CD8-positive, alpha-beta T cell (primary cell): ENCODE measurements at regions of chr9 and their contacts with region 1.

Region 1: DNA sequence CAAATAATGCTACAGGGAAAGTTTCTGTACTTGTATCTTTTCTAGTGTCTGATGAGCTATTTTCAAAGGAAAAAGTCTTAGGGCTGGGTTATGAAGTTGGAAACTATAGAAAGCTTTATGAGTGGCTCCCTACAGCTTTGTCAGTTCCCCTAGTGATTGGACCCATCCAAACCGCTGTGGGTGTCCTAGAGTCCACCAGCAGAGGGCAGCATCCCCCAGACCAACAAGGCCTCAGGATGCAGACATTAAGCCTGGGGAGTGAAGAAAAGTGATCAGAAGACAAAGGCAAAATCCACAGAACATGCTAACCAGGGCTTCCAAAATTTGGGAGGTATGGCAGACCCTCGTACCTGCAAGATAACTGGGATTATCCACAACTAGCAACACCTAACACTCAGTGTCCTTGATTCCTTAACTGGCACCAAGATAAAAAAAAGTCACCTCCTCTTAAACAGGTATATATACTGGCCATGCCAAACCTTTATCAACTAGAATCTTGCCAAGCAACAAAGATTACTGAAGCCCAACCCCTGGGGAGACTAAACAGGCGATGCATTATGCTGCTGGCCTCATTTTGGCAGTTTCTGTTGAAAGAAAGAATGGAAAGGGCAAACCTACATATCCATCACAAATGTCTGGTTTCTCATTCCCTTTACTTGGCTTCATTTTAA is 110.4 kb upstream of the NR5A1 start:
- DNase-seq: peak; percentile 41 to 82 (median 74)
- ATAC-seq: peak; percentile 73
- H3K4me3 ChIP-seq: no peak overlapping the region
- H3K4me3 Mint-ChIP-seq: no peak overlapping the region
- H3K27ac ChIP-seq: no peak overlapping the region
- H3K27ac Mint-ChIP-seq: no peak overlapping the region
- H3K4me1 ChIP-seq: no peaks in the 10 kb centered on the region
- H3K4me1 Mint-ChIP-seq: no peaks in the 10 kb centered on the region
- H3K27me3 ChIP-seq: peaks cover 0 to 4% of the 10 kb centered on the region in 2 experiments
- H3K27me3 Mint-ChIP-seq: peaks cover 9% of the 10 kb centered on the region
- CTCF ChIP-seq: peak; percentile 80

Region 2: GRCh38 chr9:124511426-124511840 is 106.2 kb before region 1 on chr9:
- CTCF ChIA-PET with region 1: no interaction called
- POLR2A ChIA-PET with region 1: no interaction called
- intact Hi-C with region 1: no loop called
- DNase-seq: no peak
- ATAC-seq: no peak
- H3K4me3 ChIP-seq: no peak overlapping the region
- H3K4me3 Mint-ChIP-seq: no peak overlapping the region
- H3K27ac ChIP-seq: no peak overlapping the region
- H3K27ac Mint-ChIP-seq: no peak overlapping the region
- H3K4me1 ChIP-seq: no peaks in the 10 kb centered on the region
- H3K4me1 Mint-ChIP-seq: no peaks in the 10 kb centered on the region
- H3K27me3 ChIP-seq: no peaks in the 10 kb centered on the region
- H3K27me3 Mint-ChIP-seq: peaks cover 14% of the 10 kb centered on the region
- CTCF ChIP-seq: no peak

Region 3: DNA sequence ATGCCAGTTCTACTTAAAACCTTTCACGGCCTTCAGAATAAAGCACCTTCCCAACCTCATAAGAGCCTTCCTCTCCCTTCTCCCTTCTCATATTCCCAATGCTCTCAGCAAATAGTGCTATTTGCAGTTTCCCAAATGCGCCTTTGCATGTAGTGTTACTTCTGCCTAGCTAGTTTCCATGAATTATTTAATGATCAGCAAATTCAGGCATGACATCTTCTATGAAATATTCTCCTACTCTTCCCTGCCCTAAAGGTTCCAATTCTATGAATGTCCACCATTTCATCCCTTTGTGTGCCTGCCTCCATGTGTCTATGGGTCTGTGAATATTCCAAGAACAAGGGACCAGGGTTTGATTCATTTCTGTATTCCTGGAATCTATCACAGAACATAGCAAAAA is 11.6 kb before region 1 on chr9:
- CTCF ChIA-PET with region 1: interaction called, 15 read pairs
- POLR2A ChIA-PET with region 1: no interaction called
- intact Hi-C with region 1: no loop called
- DNase-seq: no peak
- ATAC-seq: no peak
- H3K4me3 ChIP-seq: no peak overlapping the region
- H3K4me3 Mint-ChIP-seq: no peak overlapping the region
- H3K27ac ChIP-seq: no peak overlapping the region
- H3K27ac Mint-ChIP-seq: no peak overlapping the region
- H3K4me1 ChIP-seq: no peaks in the 10 kb centered on the region
- H3K4me1 Mint-ChIP-seq: no peaks in the 10 kb centered on the region
- H3K27me3 ChIP-seq: no peaks in the 10 kb centered on the region
- H3K27me3 Mint-ChIP-seq: no peaks in the 10 kb centered on the region
- CTCF ChIP-seq: no peak

Region 4: DNA sequence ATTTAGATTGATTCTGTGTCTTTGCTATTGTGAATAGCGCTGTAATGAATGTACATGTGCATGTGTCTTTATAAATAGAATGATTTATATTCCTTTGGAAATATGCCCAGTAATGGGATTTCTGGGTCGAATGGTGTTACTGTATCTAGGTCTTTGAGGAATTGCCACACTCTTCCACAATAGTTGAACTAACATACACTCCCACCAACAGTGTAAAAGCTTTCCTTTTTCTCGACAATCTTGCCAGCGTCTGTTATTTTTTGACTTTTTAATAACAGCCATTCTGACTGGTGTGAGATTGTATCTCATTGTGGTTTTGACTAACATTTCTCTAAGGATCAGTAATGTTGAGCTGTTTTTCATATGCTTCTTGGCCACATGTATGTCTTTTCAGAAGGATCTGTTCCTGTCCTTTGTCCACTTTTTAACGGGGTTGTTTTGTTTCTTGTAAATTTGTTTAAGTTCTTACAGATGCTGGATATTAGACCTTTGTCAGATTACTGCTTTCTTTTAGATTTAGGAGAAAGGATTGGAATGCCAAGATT is 14.5 kb after region 1 on chr9:
- CTCF ChIA-PET with region 1: interaction called, 14 read pairs
- POLR2A ChIA-PET with region 1: no interaction called
- intact Hi-C with region 1: no loop called
- DNase-seq: no peak
- ATAC-seq: no peak
- H3K4me3 ChIP-seq: no peak overlapping the region
- H3K4me3 Mint-ChIP-seq: no peak overlapping the region
- H3K27ac ChIP-seq: no peak overlapping the region
- H3K27ac Mint-ChIP-seq: no peak overlapping the region
- H3K4me1 ChIP-seq: no peaks in the 10 kb centered on the region
- H3K4me1 Mint-ChIP-seq: no peaks in the 10 kb centered on the region
- H3K27me3 ChIP-seq: no peaks in the 10 kb centered on the region
- H3K27me3 Mint-ChIP-seq: peaks cover 10% of the 10 kb centered on the region
- CTCF ChIP-seq: no peak

Region 5: GRCh38 chr9:124852829-124853531 is 235.4 kb after region 1 on chr9 and contains the start of gene WDR38:
- CTCF ChIA-PET with region 1: interaction called, 6 read pairs
- POLR2A ChIA-PET with region 1: no interaction called
- intact Hi-C with region 1: loop called in 1 of 2 experiments (anchors 1 kb)
- DNase-seq: peak; percentile 64 to 95 (median 80)
- ATAC-seq: peak; percentile 83
- H3K4me3 ChIP-seq: peak within 1 kb of the TSS; percentile 37 to 44
- H3K4me3 Mint-ChIP-seq: peak within 1 kb of the TSS; percentile 65
- H3K27ac ChIP-seq: peak within 1 kb of the TSS in 1 of 2 experiments; percentile 73
- H3K27ac Mint-ChIP-seq: peak within 1 kb of the TSS; percentile 64
- H3K4me1 ChIP-seq: peaks cover 12% of the 10 kb centered on the region
- H3K4me1 Mint-ChIP-seq: peaks cover 9% of the 10 kb centered on the region
- H3K27me3 ChIP-seq: no peaks in the 10 kb centered on the region
- H3K27me3 Mint-ChIP-seq: peaks cover 9% of the 10 kb centered on the region
- CTCF ChIP-seq: peak; percentile 98
- total RNA-seq, gene WDR38: not detected

Region 6: DNA sequence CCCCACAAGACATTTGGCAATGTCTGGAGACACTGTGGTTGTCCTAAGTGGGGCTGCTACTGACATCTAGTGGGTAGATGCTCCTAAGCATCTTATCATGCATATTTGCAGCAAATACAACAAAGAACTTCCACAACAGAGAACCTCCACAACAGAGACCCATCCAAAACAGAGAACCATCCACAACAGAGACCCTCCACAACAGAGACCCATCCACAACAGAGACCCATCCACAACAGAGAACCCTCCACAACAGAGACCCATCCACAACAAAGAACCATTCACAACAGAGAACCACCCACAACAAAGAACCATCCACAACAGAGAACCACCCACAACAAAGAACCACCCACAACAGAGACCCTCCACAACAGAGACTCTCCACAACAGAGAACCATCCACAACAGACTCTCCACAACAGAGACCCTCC is 277.1 kb after region 1 on chr9:
- CTCF ChIA-PET with region 1: no interaction called
- POLR2A ChIA-PET with region 1: no interaction called
- intact Hi-C with region 1: loop called in 1 of 2 experiments (anchors 2 kb)
- DNase-seq: peak in 8 of 9 experiments; percentile 21 to 83 (median 53)
- ATAC-seq: peak; percentile 97
- H3K4me3 ChIP-seq: no peak overlapping the region
- H3K4me3 Mint-ChIP-seq: no peak overlapping the region
- H3K27ac ChIP-seq: no peak overlapping the region
- H3K27ac Mint-ChIP-seq: peak overlapping the region; percentile 81
- H3K4me1 ChIP-seq: no peaks in the 10 kb centered on the region
- H3K4me1 Mint-ChIP-seq: peaks cover 13% of the 10 kb centered on the region
- H3K27me3 ChIP-seq: peaks cover 0 to 7% of the 10 kb centered on the region in 2 experiments
- H3K27me3 Mint-ChIP-seq: peaks cover 13% of the 10 kb centered on the region
- CTCF ChIP-seq: peak; percentile 63

Region 7: GRCh38 chr9:125374443-125375309 is 757.1 kb after region 1 on chr9:
- CTCF ChIA-PET with region 1: no interaction called
- POLR2A ChIA-PET with region 1: no interaction called
- intact Hi-C with region 1: loop called in 1 of 2 experiments (anchors 1 kb)
- DNase-seq: peak; percentile 25 to 77 (median 58)
- ATAC-seq: peak; percentile 96
- H3K4me3 ChIP-seq: no peak overlapping the region
- H3K4me3 Mint-ChIP-seq: peak overlapping the region; percentile 64
- H3K27ac ChIP-seq: no peak overlapping the region
- H3K27ac Mint-ChIP-seq: no peak overlapping the region
- H3K4me1 ChIP-seq: peaks cover 11% of the 10 kb centered on the region
- H3K4me1 Mint-ChIP-seq: peaks cover 10% of the 10 kb centered on the region
- H3K27me3 ChIP-seq: no peaks in the 10 kb centered on the region
- H3K27me3 Mint-ChIP-seq: peaks cover 10% of the 10 kb centered on the region
- CTCF ChIP-seq: peak; percentile 76